ENCODE measurements at regions of chr10 and their contacts with region 1.

Region 1: GRCh38 chr10:102503281-102504220 is at the start of gene SUFU:
- DNase-seq: peak; percentile 99
- H3K4me3 Mint-ChIP-seq: no peak within 1 kb of the TSS
- H3K27ac Mint-ChIP-seq: peak within 1 kb of the TSS; percentile 82
- H3K4me1 Mint-ChIP-seq: peaks cover 28% of the 10 kb centered on the region
- H3K27me3 Mint-ChIP-seq: no peaks in the 10 kb centered on the region
- total RNA-seq, gene SUFU: 8.4 and 9.9 TPM in 2 replicates

Region 2: DNA sequence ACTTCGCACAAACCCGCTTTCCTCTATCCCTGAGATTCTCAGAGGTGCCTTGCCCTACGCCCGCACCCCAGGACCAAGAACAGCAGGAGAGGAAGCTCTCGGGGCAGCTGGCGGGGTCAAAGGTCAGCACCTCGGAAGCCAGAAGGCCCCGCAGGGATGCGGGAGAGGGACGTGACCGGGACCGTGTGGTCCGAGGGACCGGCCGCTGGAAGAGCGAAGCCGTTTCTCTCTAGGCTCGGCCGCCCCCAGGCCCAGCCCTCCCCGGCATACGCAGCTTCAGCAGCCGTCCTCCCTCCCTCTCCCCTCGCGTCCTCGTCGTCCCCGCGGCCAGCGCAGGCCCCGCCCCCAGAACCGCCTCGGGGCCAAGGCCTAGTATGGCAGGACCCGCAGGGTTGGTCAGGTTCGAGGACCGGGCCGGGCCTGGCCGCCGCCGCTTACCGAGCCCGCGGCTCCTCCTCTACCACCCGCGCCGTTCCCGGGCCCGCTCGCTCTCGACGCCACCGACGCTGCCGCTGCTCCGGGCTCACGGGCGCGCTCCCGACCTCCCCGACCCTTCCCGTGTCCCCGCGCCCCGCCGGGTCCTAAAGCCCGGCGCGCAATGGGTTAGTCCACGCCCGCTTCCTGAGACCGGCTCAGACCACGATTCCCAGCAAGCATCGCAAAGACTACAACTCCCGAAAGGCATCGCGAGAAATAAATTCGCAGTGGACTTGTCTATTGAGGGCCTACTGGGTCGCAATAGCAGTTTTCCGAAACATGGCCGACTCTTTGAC is 447.7 kb before region 1 on chr10 and contains the start of gene ARMH3:
- intact Hi-C with region 1: loop called (anchors 5 kb)
- DNase-seq: peak; percentile 97
- H3K4me3 Mint-ChIP-seq: peak within 1 kb of the TSS; percentile 98
- H3K27ac Mint-ChIP-seq: peak within 1 kb of the TSS; percentile 95
- H3K4me1 Mint-ChIP-seq: peaks cover 28% of the 10 kb centered on the region
- H3K27me3 Mint-ChIP-seq: no peaks in the 10 kb centered on the region
- total RNA-seq, gene ARMH3: 20.9 and 23.2 TPM in 2 replicates

Region 3: GRCh38 chr10:102068216-102068615 is 435.3 kb before region 1 on chr10:
- intact Hi-C with region 1: no loop called
- DNase-seq: no peak
- H3K4me3 Mint-ChIP-seq: no peak overlapping the region
- H3K27ac Mint-ChIP-seq: no peak overlapping the region
- H3K4me1 Mint-ChIP-seq: peaks cover 21% of the 10 kb centered on the region
- H3K27me3 Mint-ChIP-seq: no peaks in the 10 kb centered on the region

Region 4: DNA sequence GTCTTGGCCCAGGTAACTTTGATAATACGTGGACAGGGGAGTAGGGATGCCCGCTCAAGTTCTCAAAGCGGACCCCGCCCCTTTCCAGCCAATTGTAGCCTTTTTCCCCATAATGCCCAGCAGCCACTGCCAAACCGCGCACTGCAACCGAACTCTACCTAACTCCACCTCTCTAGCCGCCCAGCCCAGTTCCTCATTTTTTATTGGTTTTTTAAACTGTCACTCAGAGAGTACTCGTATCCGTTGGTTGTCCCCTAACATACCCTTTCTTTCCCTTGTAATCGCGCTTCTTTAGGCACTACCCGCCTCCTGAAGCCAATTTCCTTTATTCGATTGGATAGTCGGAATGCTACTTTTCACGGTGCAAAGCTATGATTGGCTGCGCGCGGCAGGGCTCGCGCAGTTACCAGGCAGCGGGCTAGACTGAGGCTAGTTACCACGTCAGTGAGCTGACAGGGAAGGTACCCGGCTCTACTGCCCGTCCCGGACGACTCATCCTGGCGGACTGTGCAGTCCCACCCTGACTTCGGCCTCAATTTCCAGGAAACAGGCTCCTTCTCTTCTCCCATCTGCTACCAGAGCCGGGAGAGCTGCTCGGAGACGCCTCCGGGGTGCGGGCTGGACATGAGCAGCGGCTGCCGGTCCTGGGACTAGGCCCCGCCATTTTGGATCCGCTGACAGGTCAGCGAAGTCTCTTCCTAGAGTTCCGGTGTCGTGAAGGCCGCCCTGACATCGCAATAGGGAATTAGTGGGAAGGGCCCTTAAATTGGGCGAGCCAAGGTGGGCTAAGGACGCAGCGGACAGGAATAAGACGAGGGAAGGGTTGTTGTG is 258.2 kb before region 1 on chr10 and contains the start of gene GBF1:
- intact Hi-C with region 1: loop called (anchors 2 kb)
- DNase-seq: peak; percentile 97
- H3K4me3 Mint-ChIP-seq: peak within 1 kb of the TSS; percentile 100
- H3K27ac Mint-ChIP-seq: peak within 1 kb of the TSS; percentile 94
- H3K4me1 Mint-ChIP-seq: peaks cover 40% of the 10 kb centered on the region
- H3K27me3 Mint-ChIP-seq: peaks cover 14% of the 10 kb centered on the region
- total RNA-seq, gene GBF1: 45.2 and 47.7 TPM in 2 replicates

Region 5: DNA sequence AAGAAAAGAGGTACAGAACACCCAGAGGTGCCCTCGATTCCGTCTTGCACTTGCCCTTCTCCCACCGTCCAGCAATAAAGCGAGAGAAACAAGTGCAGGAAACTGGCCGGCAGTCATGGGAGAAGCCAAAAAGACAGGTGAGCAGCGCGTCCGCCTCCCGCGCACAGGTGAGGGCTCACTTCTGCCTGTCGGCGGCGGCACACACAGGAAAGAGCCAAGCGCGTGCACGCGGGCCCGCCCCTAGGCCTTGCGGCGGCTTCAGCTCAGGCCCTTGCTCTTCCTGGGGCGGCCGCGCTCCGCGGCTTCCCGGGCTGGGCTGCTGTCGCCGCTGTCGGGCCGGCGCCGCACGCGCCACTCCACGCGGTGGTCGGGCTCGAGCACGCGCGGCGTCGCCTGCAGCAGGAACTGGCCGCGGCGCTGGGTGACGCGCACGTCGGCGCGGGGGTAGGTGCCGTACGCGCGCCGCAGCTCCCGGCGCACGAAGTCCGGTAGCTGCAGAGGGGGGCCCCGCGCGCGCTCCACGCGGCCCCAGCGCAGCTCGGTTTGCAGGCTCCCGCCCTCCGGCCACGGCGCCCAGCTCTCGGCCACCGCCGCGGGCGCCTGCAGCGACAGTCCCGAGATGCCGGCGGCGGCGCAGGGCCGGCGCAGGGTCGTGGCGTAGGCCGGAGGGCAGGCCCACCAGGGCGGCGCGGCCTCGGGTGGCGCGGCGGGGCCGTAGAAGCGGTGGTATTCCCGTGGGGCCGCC is 53.2 kb before region 1 on chr10:
- intact Hi-C with region 1: loop called (anchors 1 kb)
- DNase-seq: peak; percentile 97
- H3K4me3 Mint-ChIP-seq: peak overlapping the region; percentile 98
- H3K27ac Mint-ChIP-seq: peak overlapping the region; percentile 97
- H3K4me1 Mint-ChIP-seq: peaks cover 29% of the 10 kb centered on the region
- H3K27me3 Mint-ChIP-seq: no peaks in the 10 kb centered on the region

Region 6: DNA sequence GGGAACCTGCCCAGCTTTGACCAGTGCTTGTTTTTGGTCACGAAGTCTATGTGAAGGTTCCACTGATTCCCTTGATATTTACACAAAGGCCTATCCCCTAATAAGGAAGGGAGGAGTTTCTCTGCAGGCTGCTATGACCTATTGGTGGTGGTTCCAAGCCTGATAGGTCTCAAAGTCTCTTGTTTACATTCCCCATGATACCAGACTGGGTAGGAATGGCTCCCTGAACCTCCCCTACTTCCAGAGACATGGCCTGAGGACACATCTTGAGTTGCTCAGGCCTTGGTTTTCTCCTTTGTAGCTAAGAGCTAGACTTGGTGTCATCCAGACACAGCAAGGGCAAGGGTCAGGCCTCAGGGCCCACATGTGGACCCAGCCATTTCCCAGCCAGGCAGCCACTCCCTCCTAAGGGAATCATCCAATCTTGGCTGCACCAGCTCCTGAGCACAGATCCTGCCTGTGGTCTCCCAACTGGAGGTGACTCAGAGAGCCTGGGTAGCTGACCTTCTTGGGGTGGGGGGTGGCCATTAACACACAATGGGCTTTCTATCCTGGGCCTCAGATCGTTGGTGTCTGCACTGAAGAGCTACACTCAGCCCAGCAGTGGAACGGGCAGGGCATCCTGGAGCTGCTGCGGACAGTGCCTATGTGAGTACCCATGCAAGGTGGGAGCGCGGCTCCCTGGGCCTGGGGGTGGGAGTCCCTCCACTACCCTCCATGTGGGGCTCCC is 89.7 kb after region 1 on chr10:
- intact Hi-C with region 1: no loop called
- DNase-seq: no peak
- H3K4me3 Mint-ChIP-seq: no peak overlapping the region
- H3K27ac Mint-ChIP-seq: no peak overlapping the region
- H3K4me1 Mint-ChIP-seq: peaks cover 2% of the 10 kb centered on the region
- H3K27me3 Mint-ChIP-seq: no peaks in the 10 kb centered on the region

Region 7: GRCh38 chr10:102678842-102679289 is 175.3 kb after region 1 on chr10:
- intact Hi-C with region 1: loop called (anchors 5 kb)
- DNase-seq: peak; percentile 67
- H3K4me3 Mint-ChIP-seq: no peak overlapping the region
- H3K27ac Mint-ChIP-seq: no peak overlapping the region
- H3K4me1 Mint-ChIP-seq: peaks cover 30% of the 10 kb centered on the region
- H3K27me3 Mint-ChIP-seq: no peaks in the 10 kb centered on the region

Region 8: DNA sequence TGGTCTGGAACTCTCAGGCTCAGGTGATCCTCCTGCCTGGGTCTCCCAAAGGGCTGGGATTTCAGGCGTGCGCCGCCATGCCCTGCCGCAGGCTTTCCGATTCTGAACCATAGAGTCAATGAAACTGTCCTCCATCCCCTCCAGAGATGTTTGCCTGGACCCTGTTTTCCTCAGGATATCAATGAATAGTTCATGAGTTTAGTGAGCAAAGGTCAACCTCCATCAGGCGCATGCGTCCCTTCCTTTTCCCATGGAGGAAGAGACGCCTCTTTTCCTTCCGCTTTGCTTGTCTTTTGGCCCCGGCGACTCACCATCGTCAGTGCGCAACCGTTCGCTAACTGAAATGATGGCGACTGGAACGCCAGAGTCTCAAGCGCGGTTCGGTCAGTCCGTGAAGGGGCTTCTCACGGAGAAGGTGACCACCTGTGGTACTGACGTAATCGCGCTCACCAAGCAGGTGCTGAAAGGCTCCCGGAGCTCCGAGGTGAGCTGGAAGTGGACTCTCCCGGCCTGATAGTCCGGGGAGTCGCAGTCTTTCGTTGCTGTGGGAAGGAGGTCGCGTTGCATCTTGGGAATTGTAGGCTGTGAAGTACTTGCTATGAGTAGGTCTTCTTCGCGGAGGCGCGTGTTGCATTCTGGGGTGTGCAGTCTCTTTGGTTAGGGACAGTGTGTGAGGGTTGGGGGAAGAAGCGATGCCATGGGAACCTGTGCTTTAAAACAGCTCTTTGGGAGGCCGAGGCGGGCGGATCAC is 350.6 kb after region 1 on chr10 and contains the start of gene BORCS7:
- intact Hi-C with region 1: loop called (anchors 2 kb)
- DNase-seq: peak; percentile 96
- H3K4me3 Mint-ChIP-seq: peak within 1 kb of the TSS; percentile 98
- H3K27ac Mint-ChIP-seq: peak within 1 kb of the TSS; percentile 97
- H3K4me1 Mint-ChIP-seq: peaks cover 13% of the 10 kb centered on the region
- H3K27me3 Mint-ChIP-seq: no peaks in the 10 kb centered on the region
- total RNA-seq, gene BORCS7: 8.1 and 9.8 TPM in 2 replicates

Measured in activated CD4-positive, alpha-beta T cell treated with anti-CD3 and anti-CD28 coated beads, Interleukin-2, amount 10 ng/mL, durations not matched to agents 24 days and 14 days (primary cell).